ENCODE measurements at regions of chr11 and their contacts with region 1.

Region 1: DNA sequence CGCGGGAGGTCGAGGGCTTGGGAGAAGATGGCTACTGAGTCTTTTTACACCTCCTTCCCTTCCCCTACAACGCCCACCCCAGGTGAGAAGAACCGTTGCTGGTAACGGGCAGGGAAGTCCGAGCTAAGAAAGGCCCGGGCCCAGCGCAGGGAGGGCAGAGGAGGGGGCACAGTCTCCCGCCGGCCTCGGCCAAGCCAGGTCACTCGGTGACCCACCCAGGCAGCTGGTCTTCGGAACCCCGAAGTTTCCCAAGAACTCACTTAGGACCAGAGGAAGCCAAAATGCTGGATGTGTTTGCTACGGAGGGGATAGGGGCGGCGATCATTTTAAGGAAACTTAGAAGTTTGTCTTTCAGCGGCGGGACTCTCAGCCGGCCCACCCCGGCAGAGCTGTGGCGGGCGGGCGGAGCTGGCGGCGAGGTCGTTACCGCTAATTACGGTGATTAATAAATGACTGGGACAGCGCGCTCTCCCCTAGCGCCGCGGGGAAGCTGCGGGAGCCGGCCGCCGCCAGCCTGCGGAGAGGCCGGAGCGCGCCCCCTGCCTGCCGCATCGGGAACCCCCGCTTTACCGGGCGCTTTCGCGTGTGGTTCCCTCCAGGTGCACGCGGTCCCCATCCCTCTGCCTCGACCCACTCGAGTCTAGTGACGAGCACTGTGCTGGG is 820 bp downstream of the ROBO3 start:
- DNase-seq: peak; percentile 62
- H3K4me3 Mint-ChIP-seq: peak overlapping the region; percentile 42
- H3K27ac Mint-ChIP-seq: no peak overlapping the region
- H3K4me1 Mint-ChIP-seq: peaks cover 37% of the 10 kb centered on the region
- H3K27me3 Mint-ChIP-seq: peaks cover 92% of the 10 kb centered on the region

Region 2: DNA sequence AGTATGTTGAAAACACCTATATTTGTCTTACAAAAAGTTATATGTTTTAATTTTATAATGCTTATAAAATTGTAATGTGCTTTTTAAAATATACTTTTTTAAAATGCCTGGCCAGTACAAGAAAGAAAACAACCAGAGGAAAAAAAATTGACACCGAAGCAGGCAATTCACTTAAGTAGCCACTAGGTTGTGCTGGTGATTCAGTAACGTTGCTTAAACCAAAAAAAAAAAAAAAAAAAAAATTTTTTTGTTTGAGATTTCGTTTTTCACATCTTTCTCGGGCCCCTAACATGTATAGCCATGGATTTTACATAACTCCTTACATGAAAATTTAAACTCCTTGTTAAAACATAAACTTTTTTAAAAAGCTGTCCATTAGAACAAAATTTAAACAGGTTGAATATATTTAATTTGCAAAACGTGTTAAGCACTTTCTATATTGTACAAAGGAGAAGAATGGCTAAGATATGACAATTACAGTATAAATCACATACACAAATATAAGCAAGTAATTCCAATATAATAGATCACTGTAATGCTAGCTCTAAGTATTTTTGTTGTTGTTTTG is 450.6 kb before region 1 on chr11:
- CTCF ChIA-PET with region 1: interaction called, 3 read pairs
- intact Hi-C with region 1: loop called (anchors 10 kb)
- DNase-seq: no peak
- H3K4me3 Mint-ChIP-seq: no peak overlapping the region
- H3K27ac Mint-ChIP-seq: no peak overlapping the region
- H3K4me1 Mint-ChIP-seq: no peaks in the 10 kb centered on the region
- H3K27me3 Mint-ChIP-seq: peaks cover 15% of the 10 kb centered on the region

Region 3: GRCh38 chr11:124644426-124645280 is 221.4 kb before region 1 on chr11:
- CTCF ChIA-PET with region 1: interaction called, 5 read pairs
- intact Hi-C with region 1: loop called (anchors 1 kb)
- DNase-seq: peak; percentile 26
- H3K4me3 Mint-ChIP-seq: no peak overlapping the region
- H3K27ac Mint-ChIP-seq: no peak overlapping the region
- H3K4me1 Mint-ChIP-seq: no peaks in the 10 kb centered on the region
- H3K27me3 Mint-ChIP-seq: no peaks in the 10 kb centered on the region

Region 4: DNA sequence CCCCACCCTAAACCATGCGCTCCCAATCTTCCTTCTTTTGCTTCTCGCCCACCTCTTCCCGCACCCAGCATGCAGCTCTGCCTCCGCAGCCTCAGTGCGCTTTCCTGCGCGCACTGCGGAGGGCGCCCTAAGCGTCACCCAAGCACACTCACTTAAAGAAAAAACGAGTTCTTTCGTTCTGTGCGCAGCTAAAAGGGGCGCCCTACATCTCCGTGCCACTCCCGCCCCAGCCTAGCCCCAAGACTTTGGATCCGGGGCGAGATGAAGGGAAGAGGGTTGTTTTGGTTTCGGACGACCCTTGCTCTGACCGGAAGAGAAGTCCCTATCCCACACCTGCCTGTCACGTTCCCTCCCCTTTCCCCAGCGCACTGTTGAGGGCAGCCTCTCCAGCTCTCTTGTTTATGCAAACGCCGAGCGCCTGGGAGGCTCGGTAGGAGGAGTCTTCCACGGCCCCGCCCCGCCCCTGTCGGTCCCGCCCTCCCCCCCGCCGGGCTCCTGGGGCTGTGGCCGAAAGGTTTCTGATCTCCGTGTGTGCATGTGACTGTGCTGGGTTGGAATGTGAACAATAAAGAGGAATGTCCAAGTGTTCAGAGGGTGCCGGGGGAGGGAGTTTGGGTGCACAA is 119.3 kb before region 1 on chr11:
- CTCF ChIA-PET with region 1: interaction called, 6 read pairs
- intact Hi-C with region 1: loop called (anchors 2 kb)
- DNase-seq: peak; percentile 76
- H3K4me3 Mint-ChIP-seq: peak overlapping the region; percentile 83
- H3K27ac Mint-ChIP-seq: peak overlapping the region; percentile 75
- H3K4me1 Mint-ChIP-seq: peaks cover 14% of the 10 kb centered on the region
- H3K27me3 Mint-ChIP-seq: no peaks in the 10 kb centered on the region

Region 5: GRCh38 chr11:125214571-125215565 is 348.8 kb after region 1 on chr11:
- CTCF ChIA-PET with region 1: no interaction called
- intact Hi-C with region 1: no loop called
- DNase-seq: no peak
- H3K4me3 Mint-ChIP-seq: no peak overlapping the region
- H3K27ac Mint-ChIP-seq: no peak overlapping the region
- H3K4me1 Mint-ChIP-seq: no peaks in the 10 kb centered on the region
- H3K27me3 Mint-ChIP-seq: peaks cover 20% of the 10 kb centered on the region

Region 6: GRCh38 chr11:125925247-125925740 is 1059.2 kb after region 1 on chr11:
- CTCF ChIA-PET with region 1: no interaction called
- intact Hi-C with region 1: no loop called
- DNase-seq: no peak
- H3K4me3 Mint-ChIP-seq: no peak overlapping the region
- H3K27ac Mint-ChIP-seq: no peak overlapping the region
- H3K4me1 Mint-ChIP-seq: no peaks in the 10 kb centered on the region
- H3K27me3 Mint-ChIP-seq: peaks cover 4% of the 10 kb centered on the region